Posterior cingulate gyrus (tissue), 11 donors: ENCODE measurements at regions of chr1 and their contacts with region 1.

Region 1: DNA sequence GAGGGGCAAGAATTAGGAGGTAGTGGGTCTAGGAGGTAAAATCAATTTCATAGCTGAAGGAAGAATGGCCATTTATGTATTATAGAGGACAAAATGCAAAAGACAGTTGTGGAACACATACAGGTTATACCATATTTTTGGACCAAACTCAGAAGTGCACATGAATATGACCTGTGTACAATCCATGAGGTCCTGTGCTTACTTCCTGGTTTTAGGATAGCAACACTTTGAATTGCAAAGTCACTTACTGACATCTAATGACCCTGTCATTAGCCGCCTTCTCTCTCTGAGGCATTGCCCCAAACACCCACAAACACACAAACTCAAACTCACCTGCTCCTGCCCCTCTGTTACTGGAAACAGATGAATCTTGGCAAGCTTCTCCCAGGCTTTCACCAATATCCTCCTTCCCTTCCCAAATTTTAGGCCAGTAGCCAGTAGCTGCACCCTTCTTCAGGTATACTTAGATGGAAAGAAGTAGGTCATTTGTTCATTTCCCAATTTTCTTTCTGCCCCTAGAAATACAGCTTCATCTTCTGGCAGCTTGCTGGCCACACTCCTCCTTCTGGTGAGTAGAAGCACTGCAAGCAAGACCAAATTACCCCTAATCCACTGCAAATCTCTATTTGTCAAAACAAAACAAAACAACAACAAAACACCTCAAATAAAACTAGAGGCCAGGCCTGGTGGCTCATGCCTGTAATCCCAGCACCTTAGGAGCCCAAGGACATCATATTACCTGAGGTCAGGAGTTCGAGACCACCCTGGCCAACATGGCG is 13.7 kb upstream of the RPL5 start:
- DNase-seq: no peak

Region 2: GRCh38 chr1:92411511-92411910 is 406.7 kb before region 1 on chr1:
- intact Hi-C with region 1: no loop called
- DNase-seq: no peak

Region 3: GRCh38 chr1:92749024-92749634 is 69.0 kb before region 1 on chr1:
- intact Hi-C with region 1: loop called (anchors 2 kb)
- DNase-seq: peak in 1 of 10 donors; percentile 53